ENCODE measurements at regions of chr6 and their contacts with region 1.

Region 1: GRCh38 chr6:119163006-119163405 is 84.5 kb upstream of the FAM184A start:
- DNase-seq: no peak
- H3K4me3 ChIP-seq: no peak overlapping the region
- H3K4me3 Mint-ChIP-seq: no peak overlapping the region
- H3K27ac ChIP-seq: no peak overlapping the region
- H3K27ac Mint-ChIP-seq: no peak overlapping the region
- H3K4me1 ChIP-seq: no peaks in the 10 kb centered on the region
- H3K4me1 Mint-ChIP-seq: no peaks in the 10 kb centered on the region
- H3K27me3 ChIP-seq: no peaks in the 10 kb centered on the region
- H3K27me3 Mint-ChIP-seq: peaks cover 11 to 46% of the 10 kb centered on the region in 2 donors

Region 2: DNA sequence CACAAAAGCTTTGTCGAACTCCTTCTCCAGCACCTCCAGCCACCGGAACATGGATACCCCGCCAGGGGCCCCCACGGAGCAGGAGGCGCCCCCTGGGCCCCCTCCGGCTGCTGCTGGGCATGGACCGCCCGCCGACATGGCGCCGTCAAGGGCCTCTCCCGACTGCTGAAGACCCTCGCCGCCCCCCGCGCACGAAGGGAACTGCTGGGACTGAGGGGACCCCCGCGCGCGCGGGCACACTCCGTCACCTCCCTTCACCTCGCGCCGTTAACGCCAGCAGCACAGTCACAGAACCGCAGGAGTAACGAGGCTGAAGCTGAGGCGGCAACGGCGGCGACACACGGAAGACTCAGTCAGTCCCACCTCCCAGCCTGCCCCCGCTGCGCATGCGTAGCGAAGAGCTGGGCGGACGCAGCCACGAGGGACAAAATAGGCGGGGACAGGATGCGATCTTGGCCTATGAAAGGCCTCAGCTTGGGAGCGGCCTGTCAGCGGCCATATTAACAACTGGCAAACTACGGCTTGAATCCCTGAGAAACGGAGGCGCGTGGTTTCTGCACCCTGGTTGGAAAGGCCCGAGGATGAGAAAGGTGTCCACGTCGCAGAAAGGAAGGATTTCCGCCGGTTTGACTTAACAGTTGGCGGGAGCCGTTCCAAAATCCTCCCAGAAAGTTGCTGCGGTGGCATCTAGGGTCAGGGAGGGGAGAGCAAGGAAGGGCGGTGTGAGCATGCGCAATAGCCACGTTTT is 1560.7 kb before region 1 on chr6 and contains the start of gene GOPC:
- CTCF ChIA-PET with region 1: no interaction called
- POLR2A ChIA-PET with region 1: interaction called, 10 read pairs
- DNase-seq: peak; percentile 91 to 98 (median 96)
- H3K4me3 ChIP-seq: peak within 1 kb of the TSS; percentile 92
- H3K4me3 Mint-ChIP-seq: peak within 1 kb of the TSS; percentile 96 to 100 (median 99)
- H3K27ac ChIP-seq: peak within 1 kb of the TSS; percentile 79
- H3K27ac Mint-ChIP-seq: peak within 1 kb of the TSS; percentile 89 to 99 (median 98)
- H3K4me1 ChIP-seq: peaks cover 30% of the 10 kb centered on the region
- H3K4me1 Mint-ChIP-seq: peaks cover 45 to 54% (median 53%) of the 10 kb centered on the region in 3 donors
- H3K27me3 ChIP-seq: no peaks in the 10 kb centered on the region
- H3K27me3 Mint-ChIP-seq: peaks cover 0 to 9% of the 10 kb centered on the region in 2 donors
- total RNA-seq, gene GOPC: 21.2 to 22.0 TPM

Region 3: GRCh38 chr6:119116712-119117281 is 46.2 kb before region 1 on chr6:
- CTCF ChIA-PET with region 1: no interaction called
- POLR2A ChIA-PET with region 1: no interaction called
- DNase-seq: no peak
- H3K4me3 ChIP-seq: no peak overlapping the region
- H3K4me3 Mint-ChIP-seq: no peak overlapping the region
- H3K27ac ChIP-seq: no peak overlapping the region
- H3K27ac Mint-ChIP-seq: no peak overlapping the region
- H3K4me1 ChIP-seq: no peaks in the 10 kb centered on the region
- H3K4me1 Mint-ChIP-seq: no peaks in the 10 kb centered on the region
- H3K27me3 ChIP-seq: no peaks in the 10 kb centered on the region
- H3K27me3 Mint-ChIP-seq: peaks cover 2 to 7% of the 10 kb centered on the region in 2 donors